Colonic mucosa (tissue), 4 donors: ENCODE measurements at regions of chr12 and their contacts with region 1.

Region 1: DNA sequence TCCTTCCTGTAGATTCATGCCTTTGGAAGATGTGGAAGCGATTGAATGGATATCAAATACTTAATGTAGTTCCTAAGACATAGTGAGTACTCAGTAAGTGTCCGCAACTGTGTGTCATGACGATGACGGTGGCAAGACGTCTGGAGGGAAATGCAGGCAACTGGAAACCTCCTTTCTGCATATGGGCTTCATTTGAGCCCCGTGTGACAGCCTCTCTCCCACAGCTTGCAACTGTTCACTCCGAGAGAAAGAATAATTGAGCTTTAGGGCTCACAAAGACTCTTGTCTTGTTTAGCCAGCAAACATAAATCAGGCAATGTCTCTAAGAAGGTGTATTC is 6.9 kb downstream of the CFAP251 start:
- DNase-seq: no peak
- H3K4me3 ChIP-seq: no peak overlapping the region
- H3K27ac ChIP-seq: no peak overlapping the region
- H3K4me1 ChIP-seq: no peaks in the 10 kb centered on the region
- H3K27me3 ChIP-seq: no peaks in the 10 kb centered on the region
- CTCF ChIP-seq: no peak

Region 2: DNA sequence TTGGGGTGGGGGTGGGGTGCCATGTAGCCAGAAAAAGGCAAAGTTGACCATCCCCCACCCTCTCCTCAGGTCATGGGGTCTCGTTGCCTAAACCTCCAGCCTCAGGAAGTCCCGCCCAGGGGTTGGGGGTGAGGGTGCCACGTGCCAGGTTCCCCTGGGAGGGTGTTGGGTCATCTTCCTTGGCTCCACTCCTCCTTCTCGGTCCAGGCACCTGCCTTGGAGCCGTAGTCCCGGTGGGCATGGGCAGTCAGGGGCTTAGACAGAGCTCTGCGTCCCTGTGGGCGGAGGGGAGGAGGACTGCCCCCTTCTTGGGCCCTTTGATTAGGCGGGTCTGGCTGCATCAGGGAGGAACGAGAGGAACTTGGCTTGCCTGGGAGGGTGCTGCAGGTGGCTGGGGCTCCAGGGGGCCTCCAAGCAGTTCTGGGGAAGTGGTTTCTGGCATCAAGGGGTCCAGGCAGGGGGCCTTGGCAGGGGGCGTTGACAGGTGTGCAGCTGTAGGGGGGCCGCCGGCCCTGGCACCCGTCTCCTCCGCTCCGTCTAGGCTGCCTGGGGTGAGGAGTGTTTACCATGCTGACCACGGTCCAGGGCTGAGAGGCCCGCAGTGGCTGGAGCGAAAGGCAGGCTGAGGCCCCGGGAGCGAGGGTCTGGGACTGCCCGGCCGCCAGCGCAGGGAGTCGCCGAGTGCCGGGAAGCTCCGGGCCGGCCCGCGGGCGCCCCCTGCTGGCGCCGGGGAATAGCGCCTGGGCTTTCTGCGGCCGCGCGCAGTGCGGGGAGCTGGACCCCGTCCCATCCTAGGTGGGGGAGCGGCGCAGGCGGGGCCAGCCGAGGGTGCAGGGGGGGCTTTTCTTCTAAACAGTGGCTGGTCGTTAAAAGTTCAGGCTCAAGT is 113.7 kb before region 1 on chr12:
- intact Hi-C with region 1: no loop called
- DNase-seq: peak; percentile 73
- H3K4me3 ChIP-seq: peak overlapping the region; percentile 70
- H3K27ac ChIP-seq: peak overlapping the region; percentile 37
- H3K4me1 ChIP-seq: peaks cover 18% of the 10 kb centered on the region
- H3K27me3 ChIP-seq: no peaks in the 10 kb centered on the region
- CTCF ChIP-seq: peak; percentile 99

Region 3: DNA sequence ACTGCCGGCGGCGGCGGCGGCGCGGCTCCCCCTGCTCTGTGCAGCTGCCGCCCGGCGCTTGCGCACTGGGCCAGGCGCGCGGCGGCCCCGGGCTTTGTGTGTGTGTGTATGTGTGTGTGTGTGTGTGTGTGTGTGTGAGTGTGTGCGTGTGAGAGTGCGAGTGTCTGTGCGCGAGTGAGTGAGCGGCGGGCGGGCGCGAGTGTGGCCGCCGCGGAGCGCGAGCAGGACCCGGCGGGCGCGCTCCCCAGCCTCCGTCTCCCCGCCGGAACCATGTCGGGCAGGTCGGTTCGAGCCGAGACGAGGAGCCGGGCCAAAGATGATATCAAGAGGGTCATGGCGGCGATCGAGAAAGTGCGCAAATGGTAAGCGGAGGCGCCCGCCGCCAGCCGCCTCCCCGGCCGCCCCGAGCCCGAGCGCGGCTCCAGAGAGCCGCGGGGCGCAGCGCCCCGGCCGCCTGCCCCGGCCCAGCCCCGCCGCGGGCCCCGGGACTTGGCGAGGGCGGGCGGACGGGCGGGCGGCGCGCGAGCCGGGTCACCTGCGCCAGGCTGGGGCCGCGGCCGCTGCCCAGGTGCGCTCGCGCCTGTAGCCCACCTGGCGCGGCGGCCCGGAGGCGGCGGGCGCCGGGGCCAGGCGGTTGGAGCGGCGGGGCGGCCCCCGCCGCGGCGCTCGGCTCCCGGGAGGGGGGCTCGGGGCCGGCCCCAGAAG is 96.6 kb after region 1 on chr12 and contains the start of gene BCL7A:
- intact Hi-C with region 1: loop called (anchors 10 kb)
- DNase-seq: peak; percentile 75
- H3K4me3 ChIP-seq: peak within 1 kb of the TSS; percentile 59
- H3K27ac ChIP-seq: peak within 1 kb of the TSS; percentile 37
- H3K4me1 ChIP-seq: no peaks in the 10 kb centered on the region
- H3K27me3 ChIP-seq: no peaks in the 10 kb centered on the region
- CTCF ChIP-seq: no peak
- total RNA-seq, gene BCL7A: 7.0 to 10.0 TPM

Region 4: GRCh38 chr12:122174155-122174845 is 249.0 kb after region 1 on chr12 and contains the start of gene IL31:
- intact Hi-C with region 1: no loop called
- DNase-seq: no peak
- H3K4me3 ChIP-seq: no peak within 1 kb of the TSS
- H3K27ac ChIP-seq: no peak within 1 kb of the TSS
- H3K4me1 ChIP-seq: no peaks in the 10 kb centered on the region
- H3K27me3 ChIP-seq: no peaks in the 10 kb centered on the region
- CTCF ChIP-seq: no peak
- total RNA-seq, gene IL31: not detected